Activated naive CD4-positive, alpha-beta T cell treated with anti-CD3 and anti-CD28 coated beads for 36 hours (primary cell): ENCODE measurements at regions of chr17 and their contacts with region 1.

Region 1: DNA sequence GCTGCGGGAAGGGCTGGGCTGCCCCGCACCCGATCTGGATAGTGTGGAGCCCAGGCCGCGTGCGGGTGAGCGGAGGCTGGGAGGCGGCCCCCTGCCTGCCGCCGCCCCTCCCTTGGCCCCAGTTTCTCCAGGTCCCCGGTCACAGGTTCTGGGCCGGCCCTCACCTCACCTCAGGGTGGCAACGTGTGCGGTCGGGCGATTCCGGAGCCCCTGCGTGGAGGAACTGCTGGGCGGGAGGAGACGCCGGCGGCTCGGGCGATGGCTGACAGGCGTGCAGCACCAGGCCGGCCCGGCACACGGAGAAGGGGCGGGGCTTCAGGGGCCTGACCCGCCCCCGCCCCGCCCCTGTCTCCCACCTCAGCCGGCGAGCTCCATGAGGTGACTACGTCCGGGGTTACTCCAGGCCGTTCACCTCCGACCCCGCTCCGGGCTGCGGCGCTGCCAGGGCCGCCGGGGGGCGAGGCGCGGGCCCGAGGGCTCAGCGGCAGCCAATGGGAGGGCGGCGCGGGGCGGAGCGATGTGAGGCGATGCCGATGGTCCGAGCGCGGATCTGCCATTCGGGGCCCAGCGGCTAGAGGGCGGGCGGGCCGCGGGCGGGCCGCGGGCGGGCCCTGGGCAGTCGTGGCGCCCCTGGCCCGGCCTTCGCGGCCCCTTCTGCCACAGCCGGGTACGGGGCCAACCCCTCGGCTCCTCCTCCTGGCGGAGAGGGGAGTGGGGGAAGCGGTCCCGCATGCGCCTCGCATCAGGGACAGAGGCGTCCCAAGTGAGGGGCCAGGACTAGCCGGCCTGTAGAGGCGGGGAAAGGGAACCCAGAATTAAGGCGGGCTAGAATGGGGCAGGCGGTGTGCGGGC is 16.7 kb upstream of the C17orf78 start:
- DNase-seq: peak; percentile 95
- H3K4me3 Mint-ChIP-seq: peak overlapping the region; percentile 86
- H3K27ac Mint-ChIP-seq: peak overlapping the region; percentile 76
- H3K4me1 Mint-ChIP-seq: peaks cover 21% of the 10 kb centered on the region
- H3K27me3 Mint-ChIP-seq: no peaks in the 10 kb centered on the region

Region 2: DNA sequence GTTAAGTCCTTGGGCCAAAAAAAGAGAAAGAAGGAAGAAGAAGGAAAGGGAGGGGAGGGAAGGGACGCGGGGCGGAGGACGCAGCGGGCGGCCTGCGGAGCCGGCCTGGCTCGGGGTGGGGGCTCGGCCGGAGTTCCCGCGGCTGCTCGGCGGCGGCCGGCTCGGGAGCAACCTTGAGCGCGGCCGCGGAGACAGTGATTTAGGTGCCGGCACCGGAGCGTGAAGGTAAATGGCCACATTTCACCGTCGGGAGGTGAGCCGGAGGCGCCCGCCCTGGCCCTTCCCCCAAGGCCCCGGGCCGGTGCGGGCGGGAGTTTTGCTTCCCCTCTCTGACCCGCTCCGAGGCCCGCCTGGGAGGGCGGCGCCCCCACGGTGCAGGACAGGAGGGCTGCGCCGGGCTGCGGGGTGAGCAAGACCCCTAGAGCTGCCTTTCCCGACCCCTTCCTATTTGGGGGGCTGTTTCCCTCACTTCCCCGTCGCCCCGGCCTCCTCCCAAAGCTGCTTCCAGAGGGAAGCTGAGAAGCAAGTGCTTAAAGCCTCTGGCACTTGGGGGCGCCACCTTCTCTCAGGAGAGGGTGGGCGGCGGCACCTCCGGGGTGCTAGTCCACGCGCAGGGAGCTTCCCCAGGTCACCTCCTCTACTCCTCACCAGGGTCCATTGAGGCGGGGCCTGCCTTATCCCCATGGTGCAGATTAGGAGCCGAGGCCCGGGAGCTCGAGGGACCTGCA is 701.1 kb before region 1 on chr17:
- CTCF ChIA-PET with region 1: no interaction called
- intact Hi-C with region 1: no loop called
- DNase-seq: peak; percentile 41
- H3K4me3 Mint-ChIP-seq: peak overlapping the region; percentile 39
- H3K27ac Mint-ChIP-seq: no peak overlapping the region
- H3K4me1 Mint-ChIP-seq: peaks cover 7% of the 10 kb centered on the region
- H3K27me3 Mint-ChIP-seq: peaks cover 34% of the 10 kb centered on the region

Region 3: DNA sequence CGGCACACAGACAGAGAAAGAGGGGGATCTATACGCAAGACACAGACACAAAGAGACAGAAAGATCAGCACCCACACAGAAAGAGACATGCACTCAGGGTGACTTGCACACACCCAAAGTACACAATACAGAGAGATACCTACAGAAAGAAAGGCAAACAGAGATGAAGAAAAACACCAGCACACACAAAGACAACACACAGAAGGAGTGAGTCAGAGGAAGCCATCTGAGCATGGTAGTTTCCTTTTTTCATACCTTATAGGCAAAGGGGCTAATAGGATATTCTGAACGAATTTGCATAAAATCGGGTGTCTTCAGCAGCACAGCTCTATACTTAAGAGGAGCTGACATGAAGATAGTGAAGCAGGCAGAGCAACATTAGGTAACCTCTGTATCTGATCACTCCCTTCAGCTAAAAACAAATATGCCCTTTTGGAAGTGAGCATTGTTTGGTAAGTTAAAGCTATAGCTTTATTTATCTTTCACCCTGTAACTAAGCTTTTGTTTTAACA is 211.7 kb before region 1 on chr17:
- CTCF ChIA-PET with region 1: no interaction called
- intact Hi-C with region 1: no loop called
- DNase-seq: peak; percentile 7
- H3K4me3 Mint-ChIP-seq: no peak overlapping the region
- H3K27ac Mint-ChIP-seq: peak overlapping the region; percentile 2
- H3K4me1 Mint-ChIP-seq: peaks cover 13% of the 10 kb centered on the region
- H3K27me3 Mint-ChIP-seq: no peaks in the 10 kb centered on the region

Region 4: DNA sequence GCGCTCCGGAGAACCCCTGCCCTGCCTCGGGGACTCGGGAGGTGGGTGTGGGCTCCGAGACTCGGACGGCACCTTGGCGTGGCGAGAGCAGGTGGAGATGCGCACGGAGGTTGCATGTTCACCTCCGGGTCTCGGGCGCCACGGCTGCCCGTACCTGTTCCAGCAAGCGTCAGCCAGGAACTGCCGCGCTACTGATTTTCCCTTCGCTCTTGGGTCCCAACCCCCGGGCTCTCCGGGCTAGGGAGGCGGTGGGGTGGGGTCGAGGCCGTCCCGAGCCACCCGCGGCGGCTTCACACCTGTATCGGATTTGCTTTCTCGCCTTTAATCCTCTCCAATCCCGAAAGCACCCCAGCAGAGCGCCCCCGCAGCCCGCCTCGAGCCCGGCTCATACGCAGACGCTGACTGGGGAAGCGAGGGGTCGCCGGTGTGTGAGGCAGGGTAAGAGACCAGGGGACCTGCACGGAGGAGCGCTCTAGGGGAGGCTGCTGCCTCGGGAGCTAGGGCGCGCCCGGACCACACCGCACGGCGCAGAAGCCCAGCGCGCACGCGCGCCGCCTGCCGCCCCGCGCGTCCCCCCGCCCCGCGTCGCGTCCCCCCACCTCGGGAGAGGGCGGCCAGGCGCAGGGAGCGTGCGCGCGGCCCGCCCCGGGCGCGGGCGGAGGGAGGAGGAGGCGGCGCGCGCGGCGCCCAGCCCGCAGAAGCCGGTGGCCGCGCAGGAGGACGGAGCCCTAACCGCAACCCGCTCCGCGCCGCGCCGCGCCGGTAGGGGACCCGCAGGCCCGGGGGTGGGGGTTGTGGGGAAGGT is 130.3 kb after region 1 on chr17 and contains the start of gene DUSP14:
- CTCF ChIA-PET with region 1: no interaction called
- intact Hi-C with region 1: loop called (anchors 1 kb)
- DNase-seq: peak; percentile 71
- H3K4me3 Mint-ChIP-seq: peak within 1 kb of the TSS; percentile 94
- H3K27ac Mint-ChIP-seq: peak within 1 kb of the TSS; percentile 76
- H3K4me1 Mint-ChIP-seq: peaks cover 48% of the 10 kb centered on the region
- H3K27me3 Mint-ChIP-seq: no peaks in the 10 kb centered on the region
- total RNA-seq, gene DUSP14: 7.0 to 7.9 TPM